Endothelial cell of umbilical vein (primary cell): ENCODE measurements at regions of chr10 and their contacts with region 1.

Region 1: DNA sequence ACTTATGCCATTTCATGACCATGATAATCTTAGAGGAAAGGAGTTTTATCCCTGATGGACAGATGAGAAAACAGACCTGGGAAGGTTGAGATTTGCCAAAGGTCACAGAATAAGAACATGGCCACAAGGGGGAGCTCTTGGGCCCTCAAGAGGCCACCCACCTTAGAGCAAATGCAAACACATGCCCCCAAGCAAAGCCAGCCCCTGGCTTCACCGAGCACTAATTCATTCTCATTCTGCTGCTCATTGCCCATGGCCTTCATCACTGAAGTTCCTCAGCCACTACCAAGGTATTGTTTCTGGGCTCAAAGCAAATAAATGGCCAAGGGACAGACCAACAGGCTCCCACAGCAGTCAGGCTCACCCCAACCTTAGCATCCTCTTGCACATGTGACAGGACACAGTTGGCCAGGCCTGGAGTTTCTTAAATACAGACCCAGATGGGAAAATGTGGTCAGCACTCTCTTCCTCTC is 44.2 kb downstream of the PDLIM1 start:
- DNase-seq: peak; percentile 76
- H3K4me3 ChIP-seq: no peak overlapping the region
- H3K27ac ChIP-seq: no peak overlapping the region
- H3K4me1 ChIP-seq: peaks cover 11% of the 10 kb centered on the region
- H3K27me3 ChIP-seq: no peaks in the 10 kb centered on the region
- CTCF ChIP-seq: peak; percentile 75 to 79
- POLR2A ChIP-seq: no peak

Region 2: DNA sequence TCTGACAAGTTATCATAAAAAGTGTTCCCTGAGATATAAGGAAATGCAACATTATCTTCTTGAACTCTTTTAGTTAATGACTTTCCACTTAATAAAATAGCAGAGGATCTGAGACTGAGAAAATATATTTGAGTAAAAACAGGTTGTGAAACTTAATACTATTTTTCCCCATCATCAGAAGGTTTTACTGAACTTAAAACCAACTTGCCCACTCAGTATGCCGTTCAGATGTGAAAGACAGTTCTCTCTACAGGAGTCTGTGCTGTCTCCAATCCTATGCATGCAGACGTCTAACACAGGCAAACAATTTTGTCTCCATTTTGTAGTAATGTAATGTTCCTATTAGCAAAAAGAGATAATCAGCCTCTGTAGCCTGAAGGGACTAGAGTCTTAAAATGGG is 601.3 kb before region 1 on chr10:
- CTCF ChIA-PET with region 1: no interaction called
- POLR2A ChIA-PET with region 1: no interaction called
- dilution Hi-C with region 1: no loop called
- intact Hi-C with region 1: no loop called
- DNase-seq: no peak
- H3K4me3 ChIP-seq: no peak overlapping the region
- H3K27ac ChIP-seq: no peak overlapping the region
- H3K4me1 ChIP-seq: no peaks in the 10 kb centered on the region
- H3K27me3 ChIP-seq: no peaks in the 10 kb centered on the region
- CTCF ChIP-seq: no peak
- POLR2A ChIP-seq: no peak

Region 3: DNA sequence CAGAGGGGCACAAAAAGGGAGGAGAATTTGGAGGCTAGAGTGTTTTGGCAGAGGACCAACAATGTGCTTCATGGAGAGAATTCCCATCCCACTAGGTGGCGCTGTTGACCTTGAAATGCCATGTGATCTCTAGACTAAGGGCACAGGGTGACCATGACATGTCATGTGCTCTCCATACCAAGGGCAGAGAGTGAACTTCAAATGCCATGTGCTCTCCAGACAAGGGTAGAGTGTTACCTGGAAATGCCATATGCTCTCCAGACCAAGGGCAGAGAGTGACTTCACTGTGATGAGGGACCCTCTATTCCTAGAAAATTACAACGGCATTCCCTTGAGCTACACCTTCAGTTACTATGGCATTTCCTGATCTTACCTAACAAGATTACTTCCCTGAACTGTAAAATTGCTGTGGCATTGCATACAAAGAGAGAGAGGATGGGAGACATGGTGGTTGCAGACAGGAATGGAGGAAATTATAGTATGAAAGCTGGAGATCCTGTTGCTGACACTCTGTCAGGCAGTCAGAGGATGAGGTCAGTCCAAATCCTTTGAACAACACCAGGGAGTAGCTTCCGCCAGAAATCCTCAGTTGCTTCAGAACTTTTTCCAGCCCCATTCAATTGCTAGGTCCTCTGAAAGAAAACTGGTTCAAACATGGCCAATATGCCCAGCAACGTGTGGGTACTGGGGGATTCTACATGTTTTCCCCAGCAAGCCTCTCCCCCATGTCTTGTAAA is 113.4 kb before region 1 on chr10:
- CTCF ChIA-PET with region 1: interaction called, 86 read pairs
- POLR2A ChIA-PET with region 1: no interaction called
- dilution Hi-C with region 1: no loop called
- intact Hi-C with region 1: loop called (anchors 1 kb)
- DNase-seq: peak; percentile 74
- H3K4me3 ChIP-seq: no peak overlapping the region
- H3K27ac ChIP-seq: no peak overlapping the region
- H3K4me1 ChIP-seq: no peaks in the 10 kb centered on the region
- H3K27me3 ChIP-seq: no peaks in the 10 kb centered on the region
- CTCF ChIP-seq: peak; percentile 73 to 77
- POLR2A ChIP-seq: no peak

Region 4: DNA sequence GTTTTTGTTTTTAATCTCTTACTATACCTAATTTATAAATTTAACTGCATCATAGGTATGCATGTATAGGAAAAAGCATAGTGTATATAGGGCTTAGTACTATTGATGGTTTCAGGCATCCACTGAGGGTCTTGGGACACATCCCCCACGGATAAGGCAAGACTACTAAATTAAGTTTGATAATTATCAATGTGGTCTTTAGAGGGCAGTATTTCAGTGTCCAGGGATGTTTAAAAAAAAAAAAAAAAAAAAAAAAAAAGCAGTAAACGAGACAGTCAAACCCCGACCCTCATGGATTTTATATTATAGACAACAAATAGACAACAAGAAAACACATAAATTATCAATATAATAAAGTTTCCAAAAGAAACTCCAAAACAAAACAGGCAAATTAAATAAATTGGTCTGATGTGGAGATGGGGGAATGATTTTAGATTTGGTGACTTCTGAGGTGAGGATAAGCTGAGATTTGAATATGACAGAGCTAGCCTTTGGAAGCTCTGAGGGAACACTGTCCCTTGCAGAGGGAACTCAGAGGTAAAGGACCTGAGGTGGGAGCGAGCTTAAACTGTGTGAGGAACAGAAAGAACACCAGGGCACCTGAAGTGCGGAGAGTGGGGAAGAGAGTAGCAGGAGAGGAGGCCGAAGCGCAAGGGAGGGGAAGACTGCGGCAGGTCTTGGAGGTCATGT is 37.8 kb before region 1 on chr10:
- CTCF ChIA-PET with region 1: interaction called, 42 read pairs
- POLR2A ChIA-PET with region 1: no interaction called
- dilution Hi-C with region 1: no loop called
- intact Hi-C with region 1: loop called (anchors 1 kb)
- DNase-seq: peak; percentile 34
- H3K4me3 ChIP-seq: no peak overlapping the region
- H3K27ac ChIP-seq: no peak overlapping the region
- H3K4me1 ChIP-seq: no peaks in the 10 kb centered on the region
- H3K27me3 ChIP-seq: no peaks in the 10 kb centered on the region
- CTCF ChIP-seq: peak; percentile 2 to 5
- POLR2A ChIP-seq: no peak

Region 5: DNA sequence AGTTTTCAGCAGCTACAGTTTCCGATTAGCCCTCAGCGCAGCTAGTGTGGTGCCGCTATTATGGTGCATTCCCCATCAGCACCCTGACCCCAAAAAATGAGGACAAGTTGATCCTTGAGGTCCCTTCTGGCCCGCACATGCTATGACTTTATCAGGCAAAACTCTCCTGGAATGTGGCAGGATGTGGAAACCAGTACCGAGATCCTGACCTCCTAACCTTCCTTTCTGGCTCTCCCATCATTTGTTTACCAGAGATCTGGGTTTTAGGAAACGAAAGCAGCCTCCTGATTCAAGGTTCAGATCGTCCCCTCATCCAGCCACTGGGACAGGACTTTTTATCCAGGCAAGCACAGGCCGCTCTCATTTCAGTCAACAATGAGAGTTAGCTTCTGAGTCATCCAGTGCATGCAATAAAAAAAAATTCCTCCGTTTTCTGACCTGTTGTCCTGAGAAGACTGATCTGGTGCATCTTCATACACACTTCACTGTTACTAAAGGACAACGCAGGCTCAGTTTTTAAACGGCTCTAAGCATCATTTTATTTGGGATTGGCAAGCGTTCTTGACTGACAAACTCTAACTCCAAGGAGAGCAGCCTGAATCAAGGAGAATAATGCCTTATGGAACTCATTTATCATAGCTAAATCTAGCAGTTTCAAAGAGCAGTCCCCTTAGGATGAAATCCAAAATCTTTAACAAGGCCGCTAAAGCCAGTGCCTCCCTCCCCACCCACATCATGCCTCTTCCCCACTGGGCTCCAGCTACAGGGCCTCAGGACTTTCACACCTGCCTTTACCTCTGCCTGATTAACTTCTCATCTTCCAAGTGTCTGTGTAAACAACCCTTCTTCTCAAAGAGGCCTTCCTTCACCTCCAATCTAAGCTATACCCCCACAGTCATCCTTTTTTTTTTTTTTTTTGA is 27.0 kb after region 1 on chr10:
- CTCF ChIA-PET with region 1: interaction called, 13 read pairs
- POLR2A ChIA-PET with region 1: no interaction called
- dilution Hi-C with region 1: no loop called
- intact Hi-C with region 1: no loop called
- DNase-seq: peak; percentile 89
- H3K4me3 ChIP-seq: peak overlapping the region in 1 of 3 experiments; percentile 23
- H3K27ac ChIP-seq: peak overlapping the region; percentile 76
- H3K4me1 ChIP-seq: peaks cover 22% of the 10 kb centered on the region
- H3K27me3 ChIP-seq: no peaks in the 10 kb centered on the region
- CTCF ChIP-seq: no peak
- POLR2A ChIP-seq: no peak

Region 6: GRCh38 chr10:95374597-95375209 is 128.1 kb after region 1 on chr10:
- CTCF ChIA-PET with region 1: interaction called, 19 read pairs
- POLR2A ChIA-PET with region 1: no interaction called
- dilution Hi-C with region 1: no loop called
- intact Hi-C with region 1: no loop called
- DNase-seq: peak; percentile 50
- H3K4me3 ChIP-seq: no peak overlapping the region
- H3K27ac ChIP-seq: no peak overlapping the region
- H3K4me1 ChIP-seq: no peaks in the 10 kb centered on the region
- H3K27me3 ChIP-seq: peaks cover 0 to 7% of the 10 kb centered on the region in 2 experiments
- CTCF ChIP-seq: peak; percentile 83 to 91
- POLR2A ChIP-seq: no peak

Region 7: GRCh38 chr10:95485445-95485844 is 238.8 kb after region 1 on chr10:
- CTCF ChIA-PET with region 1: no interaction called
- POLR2A ChIA-PET with region 1: no interaction called
- dilution Hi-C with region 1: no loop called
- intact Hi-C with region 1: no loop called
- DNase-seq: peak; percentile 69
- H3K4me3 ChIP-seq: no peak overlapping the region
- H3K27ac ChIP-seq: peak overlapping the region; percentile 39
- H3K4me1 ChIP-seq: peaks cover 15% of the 10 kb centered on the region
- H3K27me3 ChIP-seq: no peaks in the 10 kb centered on the region
- CTCF ChIP-seq: no peak
- POLR2A ChIP-seq: no peak